ENCODE measurements at regions of chr15 and their contacts with region 1.

Region 1: DNA sequence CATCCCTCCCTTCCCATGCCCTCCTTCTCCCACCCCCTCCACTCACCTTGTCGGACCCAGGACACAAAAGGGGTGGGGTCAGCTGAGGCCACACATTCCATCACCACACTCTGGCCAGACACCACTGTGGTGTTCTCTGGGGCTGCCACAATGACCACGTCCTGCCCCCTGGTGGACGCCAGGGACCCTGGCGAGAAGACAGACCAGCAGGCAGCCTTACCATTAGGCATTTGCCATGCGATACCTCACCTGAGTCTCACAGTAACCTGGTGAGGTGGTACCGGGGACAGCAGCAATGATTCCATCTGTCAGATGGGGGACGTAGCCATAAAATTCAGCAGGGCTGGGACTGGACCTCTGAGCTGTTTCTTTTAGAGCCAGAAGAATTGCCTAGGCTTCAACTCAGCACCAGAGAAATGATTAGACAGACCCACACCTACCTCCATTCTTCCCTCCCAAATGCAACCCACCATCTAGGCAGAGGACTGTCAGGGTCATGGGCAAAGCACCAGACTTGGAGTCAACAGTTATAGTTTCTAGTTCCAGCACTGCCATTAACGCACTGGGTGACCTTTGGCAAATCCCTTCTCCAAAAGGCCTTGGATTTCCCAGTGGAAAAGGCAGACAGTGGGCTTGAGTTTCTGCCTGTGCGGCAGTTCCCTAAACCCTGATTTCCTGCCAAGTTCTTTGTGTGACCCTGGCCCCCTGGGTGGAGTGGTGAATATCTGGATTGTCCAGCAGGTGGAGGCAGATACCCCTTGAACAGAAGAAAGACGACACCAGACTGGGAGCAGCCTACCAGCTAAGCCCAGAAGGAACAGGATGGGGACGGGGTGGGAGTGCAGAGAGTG is 21.8 kb downstream of the IGDCC4 start:
- DNase-seq: peak; percentile 68
- H3K4me3 Mint-ChIP-seq: no peak overlapping the region
- H3K27ac Mint-ChIP-seq: no peak overlapping the region
- H3K4me1 Mint-ChIP-seq: peaks cover 6% of the 10 kb centered on the region
- H3K27me3 Mint-ChIP-seq: peaks cover 46% of the 10 kb centered on the region

Region 2: GRCh38 chr15:65217526-65218482 is 183.2 kb before region 1 on chr15:
- CTCF ChIA-PET with region 1: no interaction called
- POLR2A ChIA-PET with region 1: no interaction called
- intact Hi-C with region 1: no loop called
- DNase-seq: no peak
- H3K4me3 Mint-ChIP-seq: no peak overlapping the region
- H3K27ac Mint-ChIP-seq: no peak overlapping the region
- H3K4me1 Mint-ChIP-seq: peaks cover 6% of the 10 kb centered on the region
- H3K27me3 Mint-ChIP-seq: no peaks in the 10 kb centered on the region

Region 3: DNA sequence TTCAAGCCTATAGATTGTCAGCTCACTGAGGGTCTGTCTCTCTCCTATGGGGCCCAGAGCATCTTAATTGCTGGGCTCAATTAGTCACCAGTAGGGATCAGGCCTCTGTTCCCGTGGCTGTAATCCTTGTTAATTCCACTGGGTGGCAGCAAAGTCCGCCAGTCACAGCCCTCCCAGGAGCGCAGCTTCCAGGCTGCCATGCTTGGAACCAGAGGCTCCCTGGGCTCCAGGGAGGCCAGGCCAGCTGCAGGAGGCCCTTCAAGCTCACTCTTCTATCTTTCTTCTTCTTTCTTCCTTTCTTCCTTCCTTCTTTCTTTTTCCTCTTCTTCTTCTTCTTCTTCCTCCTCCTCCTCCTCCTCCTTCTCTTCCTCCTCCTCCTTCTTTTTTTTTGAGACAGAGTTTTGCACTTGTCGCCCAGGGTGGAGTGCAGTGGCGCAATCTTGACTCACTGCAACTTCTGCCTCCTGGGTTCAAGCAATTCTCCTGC is 82.1 kb before region 1 on chr15:
- CTCF ChIA-PET with region 1: interaction called, 50 read pairs
- POLR2A ChIA-PET with region 1: no interaction called
- intact Hi-C with region 1: loop called (anchors 1 kb)
- DNase-seq: peak; percentile 88
- H3K4me3 Mint-ChIP-seq: no peak overlapping the region
- H3K27ac Mint-ChIP-seq: no peak overlapping the region
- H3K4me1 Mint-ChIP-seq: no peaks in the 10 kb centered on the region
- H3K27me3 Mint-ChIP-seq: peaks cover 2% of the 10 kb centered on the region

Region 4: GRCh38 chr15:65421360-65422070 is 20.5 kb after region 1 on chr15:
- CTCF ChIA-PET with region 1: interaction called, 23 read pairs
- POLR2A ChIA-PET with region 1: no interaction called
- intact Hi-C with region 1: no loop called
- DNase-seq: peak; percentile 32
- H3K4me3 Mint-ChIP-seq: peak overlapping the region; percentile 71
- H3K27ac Mint-ChIP-seq: no peak overlapping the region
- H3K4me1 Mint-ChIP-seq: peaks cover 10% of the 10 kb centered on the region
- H3K27me3 Mint-ChIP-seq: peaks cover 54% of the 10 kb centered on the region

Region 5: DNA sequence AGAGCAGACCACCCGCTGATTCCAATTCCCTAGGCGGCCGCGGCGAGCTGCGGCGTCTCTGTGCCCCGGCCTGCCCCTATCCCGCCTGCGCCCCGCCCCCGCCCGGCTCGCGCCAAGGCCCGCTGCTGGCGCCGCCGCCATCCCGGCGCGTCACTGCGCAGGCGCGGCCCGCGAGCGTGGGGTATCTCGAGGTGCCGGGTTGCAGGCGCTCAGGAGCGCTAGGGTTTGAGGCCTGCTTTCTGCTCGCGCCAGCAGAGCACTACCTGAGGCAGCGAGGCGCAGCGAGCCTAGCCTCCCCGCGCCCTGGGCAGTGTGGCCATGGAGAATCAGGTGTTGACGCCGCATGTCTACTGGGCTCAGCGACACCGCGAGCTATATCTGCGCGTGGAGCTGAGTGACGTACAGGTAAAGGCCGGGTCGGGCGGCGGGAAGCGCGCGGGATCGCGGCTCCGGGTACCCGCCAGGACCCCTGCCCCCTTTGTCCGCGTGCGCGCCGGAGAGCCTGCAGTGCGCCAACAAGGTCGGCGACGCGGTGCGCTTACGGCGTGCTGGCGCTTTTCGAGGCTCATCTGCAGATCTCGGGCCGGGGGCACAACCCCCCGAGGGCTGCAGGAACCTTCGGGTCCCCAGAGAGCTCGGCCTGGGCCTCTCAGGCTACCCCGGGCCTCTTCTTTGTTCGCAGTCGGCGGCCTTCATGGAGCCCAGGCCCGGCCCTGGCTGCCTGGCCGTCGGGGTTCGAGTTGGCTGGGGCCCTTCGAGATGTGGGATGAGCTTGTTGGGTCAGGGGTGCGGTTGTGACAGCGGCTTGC is 129.5 kb after region 1 on chr15 and contains the start of gene HACD3:
- CTCF ChIA-PET with region 1: no interaction called
- POLR2A ChIA-PET with region 1: no interaction called
- intact Hi-C with region 1: no loop called
- DNase-seq: peak; percentile 91
- H3K4me3 Mint-ChIP-seq: peak within 1 kb of the TSS; percentile 83
- H3K27ac Mint-ChIP-seq: peak within 1 kb of the TSS; percentile 77
- H3K4me1 Mint-ChIP-seq: peaks cover 29% of the 10 kb centered on the region
- H3K27me3 Mint-ChIP-seq: no peaks in the 10 kb centered on the region
- total RNA-seq, gene HACD3: 26.1 to 29.1 TPM

Measured in activated CD4-positive, alpha-beta memory T cell treated with anti-CD3 and anti-CD28 coated beads for 36 hours (primary cell).